ENCODE measurements at regions of chr17 and their contacts with region 1.

Region 1: DNA sequence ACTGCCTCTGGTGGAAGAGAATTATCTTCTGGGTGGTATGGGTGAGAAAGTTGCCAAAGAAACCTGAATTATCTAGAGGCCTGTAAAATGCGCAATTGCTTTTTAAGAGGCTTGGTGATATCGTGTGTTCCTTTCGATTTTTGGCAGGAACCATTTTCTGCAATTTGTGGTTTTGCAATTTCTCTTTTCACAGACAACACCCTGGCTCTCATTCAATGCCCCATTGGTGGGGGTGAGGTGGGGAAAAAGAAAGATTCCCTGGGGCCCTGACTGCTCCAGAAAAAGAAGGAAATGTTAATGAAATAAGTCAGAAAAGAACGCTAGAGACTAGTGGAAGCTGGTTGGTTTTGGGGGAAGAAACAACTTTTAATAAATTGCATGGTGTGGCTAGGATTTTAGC is 77.4 kb downstream of the ANKFN1 start:
- DNase-seq: no peak
- ATAC-seq: no peak
- H3K4me3 ChIP-seq: no peak overlapping the region
- H3K4me3 Mint-ChIP-seq: no peak overlapping the region
- H3K27ac ChIP-seq: no peak overlapping the region
- H3K27ac Mint-ChIP-seq: no peak overlapping the region
- H3K4me1 ChIP-seq: no peaks in the 10 kb centered on the region
- H3K4me1 Mint-ChIP-seq: no peaks in the 10 kb centered on the region
- H3K27me3 ChIP-seq: no peaks in the 10 kb centered on the region
- H3K27me3 Mint-ChIP-seq: no peaks in the 10 kb centered on the region

Region 2: DNA sequence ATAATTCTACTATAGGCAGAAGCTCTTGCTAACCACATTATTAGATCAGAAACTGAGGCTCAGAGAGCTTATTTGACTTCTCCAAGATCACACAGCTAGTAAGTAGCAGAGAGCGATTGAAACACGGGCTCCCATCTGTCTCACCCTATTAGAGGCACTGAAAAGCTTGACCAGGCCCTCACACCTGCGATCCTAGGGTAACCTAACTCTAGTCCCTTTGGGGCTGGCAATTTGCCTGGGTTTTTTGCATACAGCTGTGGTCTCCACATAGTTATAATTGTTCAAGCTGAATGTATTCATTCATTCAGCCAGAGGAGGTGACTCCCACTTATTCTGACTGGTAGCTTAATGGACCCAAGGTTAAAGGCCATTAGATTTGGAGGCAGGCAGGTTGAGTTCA is 43.8 kb after region 1 on chr17:
- CTCF ChIA-PET with region 1: interaction called in 1 of 2 experiments, 13 read pairs
- POLR2A ChIA-PET with region 1: no interaction called
- DNase-seq: no peak
- ATAC-seq: no peak
- H3K4me3 ChIP-seq: no peak overlapping the region
- H3K4me3 Mint-ChIP-seq: no peak overlapping the region
- H3K27ac ChIP-seq: no peak overlapping the region
- H3K27ac Mint-ChIP-seq: no peak overlapping the region
- H3K4me1 ChIP-seq: no peaks in the 10 kb centered on the region
- H3K4me1 Mint-ChIP-seq: no peaks in the 10 kb centered on the region
- H3K27me3 ChIP-seq: no peaks in the 10 kb centered on the region
- H3K27me3 Mint-ChIP-seq: no peaks in the 10 kb centered on the region

Measured in T-cell (primary cell).